PC-9 (cell line): ENCODE measurements at regions of chr1 and their contacts with region 1.

Region 1: DNA sequence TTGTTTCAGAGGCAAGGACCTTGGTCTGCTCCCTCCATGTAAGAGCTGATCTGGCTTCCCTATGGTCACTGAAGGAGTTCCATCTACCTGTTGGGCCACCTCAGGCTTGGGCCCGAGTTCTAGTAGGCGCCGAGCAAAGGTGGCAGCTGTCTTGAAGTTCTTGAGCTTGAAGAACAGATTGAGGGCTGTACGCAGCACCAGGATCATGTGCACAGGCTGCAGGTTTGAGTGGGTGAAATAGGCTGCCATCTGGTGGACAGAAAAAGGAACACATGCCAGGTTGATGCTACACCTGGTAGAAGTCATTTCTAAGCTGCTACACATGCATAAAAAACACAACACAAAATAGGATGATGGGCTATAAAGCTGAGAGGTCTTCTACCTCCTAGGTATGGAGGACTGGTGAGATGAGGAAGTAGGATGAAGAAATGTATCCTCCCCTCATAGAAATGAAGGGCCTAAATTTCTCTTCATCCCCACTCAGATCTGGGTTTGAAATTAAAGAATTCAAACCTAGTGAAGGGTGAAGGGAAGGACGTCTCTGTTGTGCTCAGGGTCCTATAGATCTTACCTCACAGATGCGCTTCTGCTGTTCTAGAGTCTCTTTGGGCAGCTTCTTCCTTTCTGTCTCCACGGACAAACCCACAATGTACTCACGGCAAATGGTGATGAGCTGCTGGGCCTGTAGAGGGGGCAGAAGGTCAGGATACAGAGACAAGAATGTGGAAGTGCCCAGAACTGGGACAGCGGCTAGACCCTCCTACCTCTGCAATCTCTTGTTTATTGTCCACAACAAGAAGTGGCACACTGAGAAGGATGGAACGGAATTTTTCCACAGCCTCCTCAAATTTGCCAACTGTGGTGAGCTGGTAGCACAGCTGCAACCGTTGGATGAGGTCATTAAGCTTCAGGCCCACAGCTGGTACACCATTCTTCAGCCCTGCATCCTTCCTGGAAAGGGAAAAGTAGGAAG is 6.6 kb upstream of the PEX19 start:
- DNase-seq: peak; percentile 43 to 58
- H3K4me3 ChIP-seq: no peak overlapping the region
- H3K27ac ChIP-seq: no peak overlapping the region
- H3K4me1 ChIP-seq: peaks cover 6% of the 10 kb centered on the region
- H3K27me3 ChIP-seq: no peaks in the 10 kb centered on the region
- CTCF ChIP-seq: peak; percentile 86

Region 2: GRCh38 chr1:160261893-160262794 is 29.4 kb before region 1 on chr1 and contains the start of gene DCAF8:
- CTCF ChIA-PET with region 1: interaction called, 10 read pairs
- POLR2A ChIA-PET with region 1: interaction called, 8 read pairs
- intact Hi-C with region 1: no loop called
- DNase-seq: peak; percentile 88 to 95
- H3K4me3 ChIP-seq: peak within 1 kb of the TSS; percentile 82
- H3K27ac ChIP-seq: peak within 1 kb of the TSS; percentile 84
- H3K4me1 ChIP-seq: peaks cover 31% of the 10 kb centered on the region
- H3K27me3 ChIP-seq: no peaks in the 10 kb centered on the region
- CTCF ChIP-seq: no peak
- total RNA-seq, gene DCAF8: 152 and 161 TPM in 2 replicates

Region 3: GRCh38 chr1:160325252-160325651 is 33.7 kb after region 1 on chr1:
- CTCF ChIA-PET with region 1: no interaction called
- POLR2A ChIA-PET with region 1: no interaction called
- intact Hi-C with region 1: no loop called
- DNase-seq: no peak
- H3K4me3 ChIP-seq: no peak overlapping the region
- H3K27ac ChIP-seq: no peak overlapping the region
- H3K4me1 ChIP-seq: no peaks in the 10 kb centered on the region
- H3K27me3 ChIP-seq: no peaks in the 10 kb centered on the region
- CTCF ChIP-seq: no peak